Transverse colon (tissue), 4 donors: ENCODE measurements at regions of chr3 and their contacts with region 1.

Region 1: GRCh38 chr3:142828703-142829305 is 60.1 kb downstream of the PCOLCE2 start:
- DNase-seq: peak; percentile 83
- H3K4me3 ChIP-seq: no peak overlapping the region
- H3K27ac ChIP-seq: no peak overlapping the region
- H3K4me1 ChIP-seq: no peaks in the 10 kb centered on the region
- H3K27me3 ChIP-seq: peaks cover 4% of the 10 kb centered on the region
- CTCF ChIP-seq: peak; percentile 73 to 81 (median 74)
- EP300 ChIP-seq: no peak
- POLR2A ChIP-seq: no peak

Region 2: GRCh38 chr3:142987080-142987700 is 158.4 kb after region 1 on chr3:
- in situ Hi-C with region 1: loop called (anchors 10 to 25 kb)
- intact Hi-C with region 1: no loop called
- DNase-seq: no peak
- H3K4me3 ChIP-seq: no peak overlapping the region
- H3K27ac ChIP-seq: no peak overlapping the region
- H3K4me1 ChIP-seq: peaks cover 0 to 3% (median 0%) of the 10 kb centered on the region in 4 donors
- H3K27me3 ChIP-seq: no peaks in the 10 kb centered on the region
- CTCF ChIP-seq: peak; percentile 59 to 74 (median 69)
- EP300 ChIP-seq: no peak
- POLR2A ChIP-seq: no peak